ENCODE measurements at regions of chr19 and their contacts with region 1.

Region 1: DNA sequence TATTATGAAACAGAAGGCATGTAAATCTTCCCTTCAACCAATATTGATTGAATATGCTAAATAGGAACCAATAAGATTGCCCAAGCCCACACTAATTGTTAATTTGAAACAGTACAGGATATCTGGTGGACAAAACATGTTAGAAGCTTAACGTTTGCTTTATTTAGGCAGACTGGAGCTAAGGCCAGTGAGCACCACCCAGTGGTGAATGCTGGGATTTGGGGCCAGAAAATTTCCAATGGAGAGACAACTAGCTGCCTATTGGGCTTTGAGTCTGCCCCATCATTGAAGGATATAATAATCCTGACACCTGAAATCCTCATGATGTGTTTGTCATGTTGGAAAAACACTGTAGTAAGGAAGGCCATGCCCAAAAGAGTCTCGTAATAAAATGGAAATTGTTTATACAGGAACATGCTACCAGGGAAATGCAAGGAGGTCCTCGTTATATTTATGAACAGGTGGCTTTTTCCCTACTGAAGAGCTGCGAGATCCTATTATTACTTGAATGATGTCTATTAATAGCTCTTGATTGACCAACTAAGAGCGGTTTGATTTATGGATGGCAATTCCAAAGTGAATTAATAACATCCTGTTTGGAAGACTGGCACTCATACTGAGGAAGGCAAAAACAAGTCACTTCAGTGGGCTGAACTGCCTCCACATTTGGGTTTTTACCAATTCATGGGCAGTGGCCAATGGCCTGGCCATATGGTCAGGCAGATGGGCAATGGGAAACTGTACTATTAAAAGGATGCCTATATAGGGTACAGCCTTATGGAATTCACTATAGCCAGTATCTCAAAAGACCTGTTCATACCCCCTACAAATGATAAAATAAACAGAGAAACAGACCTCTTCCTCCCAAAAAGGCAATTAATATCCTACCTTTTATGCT is 8.7 kb downstream of the SIGLECL1 start:
- DNase-seq: peak; percentile 80
- ATAC-seq: no peak
- H3K4me3 Mint-ChIP-seq: no peak overlapping the region
- H3K27ac Mint-ChIP-seq: no peak overlapping the region
- H3K4me1 Mint-ChIP-seq: peaks cover 42% of the 10 kb centered on the region
- H3K27me3 Mint-ChIP-seq: peaks cover 27% of the 10 kb centered on the region

Region 2: DNA sequence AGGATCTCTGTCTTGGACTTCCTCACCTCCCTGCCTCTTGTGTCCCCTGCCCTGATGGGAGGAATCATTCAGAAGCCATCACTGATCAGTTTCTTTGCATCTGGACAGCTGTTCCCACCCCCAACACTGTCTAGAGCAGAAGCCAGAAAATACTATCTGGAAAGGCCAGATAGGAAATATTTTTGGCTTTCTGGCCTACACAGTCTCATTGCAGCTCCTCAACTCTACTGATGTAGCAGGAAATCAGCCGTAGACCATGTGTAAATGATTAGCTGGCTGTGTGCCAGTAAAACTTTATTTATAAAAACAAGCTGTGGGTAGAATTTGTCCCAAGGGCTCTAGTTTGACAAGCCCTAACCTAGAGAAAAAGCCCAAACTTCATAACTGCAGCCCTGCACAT is 111.9 kb before region 1 on chr19:
- CTCF ChIA-PET with region 1: interaction called, 17 read pairs
- POLR2A ChIA-PET with region 1: no interaction called
- DNase-seq: no peak
- ATAC-seq: no peak
- H3K4me3 Mint-ChIP-seq: no peak overlapping the region
- H3K27ac Mint-ChIP-seq: no peak overlapping the region
- H3K4me1 Mint-ChIP-seq: no peaks in the 10 kb centered on the region
- H3K27me3 Mint-ChIP-seq: peaks cover 31% of the 10 kb centered on the region

Region 3: GRCh38 chr19:51158474-51159129 is 101.0 kb before region 1 on chr19:
- CTCF ChIA-PET with region 1: interaction called, 67 read pairs
- POLR2A ChIA-PET with region 1: no interaction called
- DNase-seq: peak; percentile 89
- ATAC-seq: peak; percentile 86
- H3K4me3 Mint-ChIP-seq: no peak overlapping the region
- H3K27ac Mint-ChIP-seq: no peak overlapping the region
- H3K4me1 Mint-ChIP-seq: peaks cover 35% of the 10 kb centered on the region
- H3K27me3 Mint-ChIP-seq: peaks cover 27% of the 10 kb centered on the region

Region 4: GRCh38 chr19:51166846-51167490 is 92.6 kb before region 1 on chr19:
- CTCF ChIA-PET with region 1: interaction called, 22 read pairs
- POLR2A ChIA-PET with region 1: no interaction called
- DNase-seq: peak; percentile 82
- ATAC-seq: peak; percentile 91
- H3K4me3 Mint-ChIP-seq: peak overlapping the region; percentile 83
- H3K27ac Mint-ChIP-seq: peak overlapping the region; percentile 78
- H3K4me1 Mint-ChIP-seq: peaks cover 61% of the 10 kb centered on the region
- H3K27me3 Mint-ChIP-seq: peaks cover 24% of the 10 kb centered on the region

Region 5: DNA sequence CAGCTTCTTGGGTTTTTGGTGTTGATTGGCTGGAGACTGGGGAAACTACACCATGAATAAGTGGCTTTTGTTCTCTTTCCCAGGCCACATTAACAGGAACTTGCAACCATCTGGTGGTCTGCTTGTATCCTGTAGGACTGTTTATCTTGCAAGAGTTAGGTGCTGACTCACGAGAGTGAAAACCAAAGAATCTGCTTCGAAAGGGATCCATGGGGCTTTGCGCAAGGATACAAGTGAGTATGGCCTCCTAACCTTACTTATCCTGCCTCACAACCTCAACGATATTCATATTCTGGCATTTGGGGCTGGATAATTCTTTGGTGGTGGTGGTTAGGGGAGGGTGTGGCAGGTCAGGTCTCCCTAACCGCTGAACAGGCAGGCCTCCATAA is 13.4 kb before region 1 on chr19:
- CTCF ChIA-PET with region 1: interaction called, 20 read pairs
- POLR2A ChIA-PET with region 1: no interaction called
- DNase-seq: peak; percentile 44
- ATAC-seq: peak; percentile 69
- H3K4me3 Mint-ChIP-seq: peak overlapping the region; percentile 60
- H3K27ac Mint-ChIP-seq: peak overlapping the region; percentile 83
- H3K4me1 Mint-ChIP-seq: peaks cover 69% of the 10 kb centered on the region
- H3K27me3 Mint-ChIP-seq: peaks cover 19% of the 10 kb centered on the region

Region 6: DNA sequence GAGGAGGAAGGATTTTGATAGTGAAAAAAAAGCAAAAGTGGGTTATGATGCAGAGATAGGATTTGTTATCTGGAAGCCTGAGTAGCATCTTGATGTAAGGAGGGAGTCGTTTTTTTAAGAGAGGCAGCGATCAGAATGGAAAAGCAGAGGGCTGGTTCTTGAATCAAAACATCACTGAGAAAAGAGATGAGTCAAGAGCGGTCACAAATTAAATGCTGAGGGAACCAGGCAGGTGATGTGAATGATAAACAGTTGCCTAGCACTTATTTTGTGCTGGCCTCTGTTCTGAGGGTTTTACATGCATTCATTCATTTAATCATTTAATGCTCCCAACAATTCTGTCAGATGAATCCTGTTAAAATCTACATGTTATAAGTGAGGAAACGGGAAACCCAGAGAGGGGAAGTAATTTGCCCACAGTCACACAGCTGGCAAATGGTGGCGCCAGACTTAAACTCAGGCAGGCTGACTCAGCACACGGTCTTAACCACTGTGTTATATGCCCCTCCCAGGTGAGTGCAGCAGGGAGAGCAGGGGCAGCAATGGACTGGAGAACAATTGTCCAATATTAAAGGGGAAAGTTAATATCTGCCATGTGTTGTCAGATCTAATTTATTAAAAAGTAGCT is 12.7 kb after region 1 on chr19:
- CTCF ChIA-PET with region 1: interaction called, 18 read pairs
- POLR2A ChIA-PET with region 1: no interaction called
- DNase-seq: peak; percentile 42
- ATAC-seq: peak; percentile 49
- H3K4me3 Mint-ChIP-seq: no peak overlapping the region
- H3K27ac Mint-ChIP-seq: no peak overlapping the region
- H3K4me1 Mint-ChIP-seq: peaks cover 15% of the 10 kb centered on the region
- H3K27me3 Mint-ChIP-seq: peaks cover 28% of the 10 kb centered on the region